Activated naive CD4-positive, alpha-beta T cell treated with anti-CD3 and anti-CD28 coated beads for 36 hours (primary cell): ENCODE measurements at regions of chr7 and their contacts with region 1.

Region 1: GRCh38 chr7:149854611-149855360 is 16.6 kb downstream of the ZNF862 start:
- DNase-seq: peak; percentile 70
- H3K4me3 Mint-ChIP-seq: no peak overlapping the region
- H3K27ac Mint-ChIP-seq: no peak overlapping the region
- H3K4me1 Mint-ChIP-seq: peaks cover 57% of the 10 kb centered on the region
- H3K27me3 Mint-ChIP-seq: no peaks in the 10 kb centered on the region

Region 2: GRCh38 chr7:149806726-149807125 is 48.1 kb before region 1 on chr7:
- CTCF ChIA-PET with region 1: no interaction called
- intact Hi-C with region 1: loop called (anchors 2 kb)
- DNase-seq: no peak
- H3K4me3 Mint-ChIP-seq: no peak overlapping the region
- H3K27ac Mint-ChIP-seq: no peak overlapping the region
- H3K4me1 Mint-ChIP-seq: no peaks in the 10 kb centered on the region
- H3K27me3 Mint-ChIP-seq: no peaks in the 10 kb centered on the region

Region 3: DNA sequence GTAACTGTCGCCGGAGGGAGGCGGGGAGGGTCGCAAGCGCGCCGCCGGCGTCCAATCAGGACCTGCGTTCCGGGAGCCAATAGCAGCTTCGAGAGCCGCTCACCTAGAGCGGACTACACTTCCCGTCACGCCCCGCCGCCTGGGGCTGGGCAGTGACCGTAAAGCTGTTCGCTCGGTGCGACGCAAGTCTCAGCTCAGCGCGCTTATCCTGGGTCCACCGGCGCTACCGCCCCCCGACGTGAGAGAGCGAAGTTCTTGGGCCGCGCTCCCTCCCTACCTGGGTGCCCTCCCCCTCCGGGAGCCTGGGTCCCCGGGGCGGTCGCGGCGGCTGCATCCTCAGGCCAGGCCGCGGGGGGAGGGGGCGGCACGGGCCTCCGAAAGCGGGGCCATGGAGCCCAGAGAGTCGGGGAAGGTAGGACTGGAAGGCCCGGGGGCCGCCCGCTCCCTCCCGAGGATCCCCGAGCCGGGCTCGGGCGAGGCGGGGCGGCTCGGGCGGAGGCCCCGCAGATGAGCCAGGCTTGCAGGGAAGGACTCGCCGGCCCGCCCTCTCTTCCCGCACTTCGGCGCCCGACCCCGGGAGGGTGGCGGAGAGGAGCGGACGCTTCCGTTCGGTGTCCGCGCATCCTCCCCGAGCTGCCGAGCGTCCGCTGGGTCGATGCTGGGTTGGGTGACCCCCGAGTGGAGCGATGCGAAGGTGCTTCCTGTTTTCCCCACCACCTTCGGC is 16.4 kb before region 1 on chr7 and contains the start of gene ZNF862:
- CTCF ChIA-PET with region 1: interaction called, 18 read pairs
- intact Hi-C with region 1: loop called (anchors 2 kb)
- DNase-seq: peak; percentile 96
- H3K4me3 Mint-ChIP-seq: peak within 1 kb of the TSS; percentile 76
- H3K27ac Mint-ChIP-seq: peak within 1 kb of the TSS; percentile 80
- H3K4me1 Mint-ChIP-seq: peaks cover 26% of the 10 kb centered on the region
- H3K27me3 Mint-ChIP-seq: no peaks in the 10 kb centered on the region
- total RNA-seq, gene ZNF862: 17.6 to 19.4 TPM

Region 4: DNA sequence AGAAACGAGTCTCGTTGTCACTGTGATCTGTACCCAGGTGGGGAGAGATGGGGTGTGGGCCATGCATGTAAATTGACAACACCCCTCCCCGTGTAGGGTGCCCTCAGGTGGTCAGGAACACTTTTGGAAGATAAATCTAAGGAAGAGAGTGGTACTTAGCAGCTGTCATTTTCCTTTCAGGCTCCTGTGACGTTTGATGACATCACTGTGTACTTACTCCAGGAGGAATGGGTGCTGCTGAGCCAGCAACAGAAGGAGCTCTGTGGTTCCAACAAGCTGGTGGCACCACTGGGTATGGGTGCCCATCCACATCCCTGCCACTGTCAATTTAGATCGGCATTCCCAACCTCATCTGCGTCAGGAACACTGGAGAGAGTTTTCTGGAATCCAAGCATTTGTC is 10.3 kb before region 1 on chr7:
- CTCF ChIA-PET with region 1: interaction called, 18 read pairs
- intact Hi-C with region 1: loop called (anchors 1 kb)
- DNase-seq: no peak
- H3K4me3 Mint-ChIP-seq: peak overlapping the region; percentile 20
- H3K27ac Mint-ChIP-seq: no peak overlapping the region
- H3K4me1 Mint-ChIP-seq: peaks cover 38% of the 10 kb centered on the region
- H3K27me3 Mint-ChIP-seq: no peaks in the 10 kb centered on the region